Activated CD8-positive, alpha-beta T cell treated with anti-CD3 and anti-CD28 coated beads, Interleukin-2, amount 10 ng/mL, durations not matched to agents 7 days and 5 days (primary cell): ENCODE measurements at regions of chr17 and their contacts with region 1.

Region 1: GRCh38 chr17:50200457-50201275 is 765 bp downstream of the COL1A1 start:
- DNase-seq: peak; percentile 88
- ATAC-seq: peak; percentile 82
- H3K4me3 Mint-ChIP-seq: peak overlapping the region; percentile 70
- H3K27ac Mint-ChIP-seq: no peak overlapping the region
- H3K4me1 Mint-ChIP-seq: peaks cover 20% of the 10 kb centered on the region
- H3K27me3 Mint-ChIP-seq: peaks cover 42% of the 10 kb centered on the region

Region 2: DNA sequence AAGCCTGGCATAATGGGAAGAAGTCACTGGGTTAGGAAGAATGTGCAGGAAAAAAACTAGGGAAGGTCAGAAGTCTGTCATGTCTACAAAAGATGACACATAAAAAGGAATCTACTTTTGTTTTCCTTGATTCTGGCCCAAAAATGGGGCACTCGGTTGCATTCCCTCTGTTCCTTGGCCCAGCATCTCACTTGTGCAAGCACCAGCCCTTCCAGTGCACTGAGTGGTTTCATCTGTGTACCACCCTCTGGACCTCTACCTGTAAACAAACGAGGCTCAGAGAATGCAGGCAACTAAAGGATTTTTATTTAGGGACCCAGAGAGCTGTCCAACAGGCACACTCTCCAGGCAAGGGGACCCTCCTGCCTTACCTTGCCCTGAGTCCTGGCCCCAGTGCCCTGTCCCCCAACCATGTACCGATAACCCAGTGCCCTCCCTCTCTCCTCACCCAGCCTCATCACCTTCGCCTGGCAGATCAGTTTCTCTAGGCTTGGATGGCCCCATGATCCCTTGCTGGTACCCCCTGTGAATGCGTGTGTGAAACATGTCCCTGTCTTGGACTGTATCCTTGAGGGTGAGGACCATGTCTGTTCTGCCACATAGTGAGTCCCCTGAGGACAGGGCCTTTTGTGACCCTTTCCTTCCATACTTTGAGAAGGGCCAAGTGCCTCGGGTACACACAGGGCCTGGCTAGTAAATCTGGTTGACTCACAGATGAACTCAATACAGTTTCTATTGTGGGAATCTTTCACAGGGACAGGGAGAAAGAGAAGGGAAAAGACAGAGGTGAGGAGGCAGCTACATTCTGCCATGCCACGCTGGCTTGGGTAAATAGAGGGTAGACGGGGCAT is 611.7 kb before region 1 on chr17:
- CTCF ChIA-PET with region 1: no interaction called
- POLR2A ChIA-PET with region 1: no interaction called
- DNase-seq: no peak
- ATAC-seq: peak; percentile 27
- H3K4me3 Mint-ChIP-seq: no peak overlapping the region
- H3K27ac Mint-ChIP-seq: no peak overlapping the region
- H3K4me1 Mint-ChIP-seq: peaks cover 4% of the 10 kb centered on the region
- H3K27me3 Mint-ChIP-seq: no peaks in the 10 kb centered on the region

Region 3: GRCh38 chr17:50114849-50115357 is 85.8 kb before region 1 on chr17:
- CTCF ChIA-PET with region 1: interaction called, 13 read pairs
- POLR2A ChIA-PET with region 1: no interaction called
- DNase-seq: peak; percentile 73
- ATAC-seq: peak; percentile 46
- H3K4me3 Mint-ChIP-seq: no peak overlapping the region
- H3K27ac Mint-ChIP-seq: no peak overlapping the region
- H3K4me1 Mint-ChIP-seq: peaks cover 11% of the 10 kb centered on the region
- H3K27me3 Mint-ChIP-seq: peaks cover 40% of the 10 kb centered on the region

Region 4: DNA sequence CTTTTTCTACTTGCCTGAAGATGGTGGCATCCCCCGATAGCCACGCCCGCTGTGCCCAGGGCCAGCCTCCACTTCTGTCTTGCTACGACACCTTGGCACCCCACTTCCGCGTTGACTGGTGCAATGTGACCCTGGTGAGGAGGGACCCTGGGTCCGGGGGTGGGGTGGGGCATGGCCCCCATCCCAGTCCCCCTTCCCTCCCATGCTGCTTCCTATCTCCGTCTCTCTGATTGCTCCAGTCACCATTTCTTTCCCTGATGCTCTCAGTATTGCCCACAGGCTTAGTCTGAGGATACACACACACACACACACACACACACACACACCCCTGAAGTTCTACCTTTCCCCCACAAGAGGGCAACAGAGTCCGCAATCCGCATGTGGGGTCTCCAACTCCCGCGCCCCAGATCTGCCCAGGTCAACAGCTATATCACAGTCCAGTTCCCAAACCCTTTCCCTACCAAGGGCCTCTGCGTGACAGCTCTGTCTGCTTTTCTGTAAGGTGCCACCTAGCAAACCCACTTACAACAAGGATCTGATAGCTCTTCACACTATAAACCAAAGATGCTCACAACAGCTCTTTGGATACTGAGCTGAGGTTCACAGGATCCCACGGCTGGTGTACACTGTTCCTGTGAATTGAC is 31.4 kb before region 1 on chr17:
- CTCF ChIA-PET with region 1: interaction called, 75 read pairs
- POLR2A ChIA-PET with region 1: interaction called, 3 read pairs
- DNase-seq: peak; percentile 66
- ATAC-seq: peak; percentile 69
- H3K4me3 Mint-ChIP-seq: peak overlapping the region; percentile 7
- H3K27ac Mint-ChIP-seq: peak overlapping the region; percentile 53
- H3K4me1 Mint-ChIP-seq: peaks cover 17% of the 10 kb centered on the region
- H3K27me3 Mint-ChIP-seq: no peaks in the 10 kb centered on the region

Region 5: DNA sequence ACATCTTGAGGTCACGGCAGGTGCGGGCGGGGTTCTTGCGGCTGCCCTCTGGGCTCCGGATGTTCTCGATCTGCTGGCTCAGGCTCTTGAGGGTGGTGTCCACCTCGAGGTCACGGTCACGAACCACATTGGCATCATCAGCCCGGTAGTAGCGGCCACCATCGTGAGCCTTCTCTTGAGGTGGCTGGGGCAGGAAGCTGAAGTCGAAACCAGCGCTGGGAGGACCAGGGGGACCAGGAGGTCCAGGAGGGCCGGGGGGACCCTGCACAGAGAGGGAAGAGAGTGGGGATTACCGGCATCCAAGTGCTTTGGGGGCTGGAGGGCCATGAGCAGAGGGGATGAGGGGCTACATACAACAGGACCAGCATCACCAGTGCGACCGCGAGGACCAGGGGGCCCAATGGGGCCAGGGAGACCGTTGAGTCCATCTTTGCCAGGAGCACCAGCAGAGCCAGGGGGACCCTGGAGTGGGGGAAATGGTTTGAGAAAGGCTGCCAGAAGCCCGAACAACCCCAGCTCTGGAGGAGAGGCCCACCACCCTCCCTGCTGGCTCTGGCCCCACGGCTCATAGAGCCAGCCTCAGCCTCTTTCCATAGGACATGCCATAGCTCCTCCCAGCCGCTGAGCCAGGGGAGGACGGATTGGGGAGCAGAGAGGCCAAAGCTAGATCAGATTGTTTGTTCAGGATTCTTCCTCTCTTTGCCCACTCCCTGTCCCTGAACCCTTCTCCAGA is 13.8 kb before region 1 on chr17:
- CTCF ChIA-PET with region 1: no interaction called
- POLR2A ChIA-PET with region 1: no interaction called
- DNase-seq: no peak
- ATAC-seq: no peak
- H3K4me3 Mint-ChIP-seq: no peak overlapping the region
- H3K27ac Mint-ChIP-seq: no peak overlapping the region
- H3K4me1 Mint-ChIP-seq: peaks cover 21% of the 10 kb centered on the region
- H3K27me3 Mint-ChIP-seq: no peaks in the 10 kb centered on the region

Region 6: DNA sequence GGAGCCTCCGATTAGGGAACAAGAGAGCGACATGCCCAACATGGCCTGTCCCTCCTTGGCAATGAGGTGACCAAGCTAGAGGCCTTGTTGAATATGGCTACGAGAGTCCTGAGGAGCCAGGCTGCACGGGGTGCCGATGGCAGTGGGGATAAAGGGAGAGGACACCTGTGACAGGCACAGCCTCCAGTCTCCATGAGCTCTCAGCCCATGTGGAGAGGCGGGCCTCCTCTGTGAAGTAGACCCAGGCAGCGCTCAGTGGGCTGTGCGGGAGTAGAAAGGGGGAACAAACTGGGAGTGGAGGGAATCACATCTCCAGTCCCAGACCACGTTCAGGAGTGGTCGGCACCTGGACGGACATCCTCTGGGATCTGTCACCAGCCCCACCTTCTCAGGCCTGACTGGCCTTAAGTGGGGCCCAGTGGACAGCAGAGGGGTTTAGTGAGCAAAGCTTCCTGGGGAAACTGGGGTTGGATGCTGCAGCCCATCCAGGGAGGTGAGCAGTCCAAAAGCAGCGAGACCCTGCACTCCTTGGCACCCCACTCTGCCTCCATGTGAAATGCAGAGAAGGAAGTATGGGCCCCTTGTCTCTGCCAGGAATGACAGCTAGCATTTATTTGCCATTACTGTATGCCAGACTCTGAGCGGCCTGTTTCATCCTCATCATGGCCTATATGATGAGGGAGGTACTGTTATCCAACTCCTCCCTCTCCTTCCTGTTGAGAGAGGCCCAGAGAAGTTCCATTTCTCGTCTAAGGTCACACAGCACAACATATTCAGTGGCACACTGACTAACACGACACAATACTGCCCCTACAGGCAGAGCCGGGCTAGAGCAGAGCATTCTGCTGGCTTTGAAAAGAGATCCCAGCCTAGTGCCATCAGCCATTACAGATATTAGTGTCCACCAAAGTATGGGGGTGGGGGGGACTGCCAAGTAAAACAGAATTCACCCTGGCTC is 69.1 kb after region 1 on chr17:
- CTCF ChIA-PET with region 1: interaction called, 191 read pairs
- POLR2A ChIA-PET with region 1: no interaction called
- DNase-seq: peak; percentile 80
- ATAC-seq: peak; percentile 82
- H3K4me3 Mint-ChIP-seq: no peak overlapping the region
- H3K27ac Mint-ChIP-seq: no peak overlapping the region
- H3K4me1 Mint-ChIP-seq: peaks cover 18% of the 10 kb centered on the region
- H3K27me3 Mint-ChIP-seq: peaks cover 18% of the 10 kb centered on the region

Region 7: GRCh38 chr17:50289991-50290702 is 89.5 kb after region 1 on chr17:
- CTCF ChIA-PET with region 1: interaction called, 148 read pairs
- POLR2A ChIA-PET with region 1: no interaction called
- DNase-seq: no peak
- ATAC-seq: peak; percentile 60
- H3K4me3 Mint-ChIP-seq: no peak overlapping the region
- H3K27ac Mint-ChIP-seq: no peak overlapping the region
- H3K4me1 Mint-ChIP-seq: peaks cover 18% of the 10 kb centered on the region
- H3K27me3 Mint-ChIP-seq: peaks cover 16% of the 10 kb centered on the region

Region 8: GRCh38 chr17:50318501-50319285 is 118.0 kb after region 1 on chr17:
- CTCF ChIA-PET with region 1: interaction called, 15 read pairs
- POLR2A ChIA-PET with region 1: no interaction called
- DNase-seq: no peak
- ATAC-seq: no peak
- H3K4me3 Mint-ChIP-seq: no peak overlapping the region
- H3K27ac Mint-ChIP-seq: no peak overlapping the region
- H3K4me1 Mint-ChIP-seq: no peaks in the 10 kb centered on the region
- H3K27me3 Mint-ChIP-seq: peaks cover 3% of the 10 kb centered on the region

Region 9: GRCh38 chr17:50397111-50397918 is 196.6 kb after region 1 on chr17 and contains the start of gene LRRC59:
- CTCF ChIA-PET with region 1: interaction called, 12 read pairs
- POLR2A ChIA-PET with region 1: no interaction called
- DNase-seq: peak; percentile 94
- ATAC-seq: peak; percentile 96
- H3K4me3 Mint-ChIP-seq: peak within 1 kb of the TSS; percentile 93
- H3K27ac Mint-ChIP-seq: peak within 1 kb of the TSS; percentile 94
- H3K4me1 Mint-ChIP-seq: peaks cover 27% of the 10 kb centered on the region
- H3K27me3 Mint-ChIP-seq: no peaks in the 10 kb centered on the region
- total RNA-seq, gene LRRC59: 77.7 to 77.9 TPM